GM13976 (cell line): ENCODE measurements at regions of chr3 and their contacts with region 1.

Region 1: DNA sequence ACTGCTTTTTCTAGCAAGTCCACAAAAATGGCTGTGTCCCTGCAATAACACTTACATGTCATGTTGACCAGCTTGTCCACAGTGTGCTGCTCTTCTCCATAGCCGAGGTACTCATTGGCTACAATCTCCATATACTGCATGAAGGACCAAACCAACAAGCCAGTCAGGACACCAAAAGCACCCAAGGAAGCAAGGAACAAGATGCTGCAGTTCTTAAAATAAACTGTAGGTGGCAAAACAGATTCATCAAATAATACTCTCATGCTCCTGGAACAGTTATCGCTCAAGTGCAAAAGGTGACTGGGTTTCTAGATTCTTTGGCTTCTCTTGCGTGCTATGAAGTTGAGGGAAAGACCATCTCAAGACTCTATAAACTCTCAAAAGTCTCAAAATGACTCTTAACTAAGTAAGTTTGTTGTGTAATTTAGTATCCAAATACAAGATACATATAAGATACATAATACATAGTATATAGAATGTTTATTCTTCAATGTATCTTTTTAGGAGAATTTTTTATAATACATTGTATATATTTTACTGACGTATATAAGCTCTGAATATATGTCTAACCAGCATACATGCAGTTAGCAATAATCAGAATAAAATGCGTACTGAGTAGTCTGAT is 57.0 kb downstream of the NEK10 start:
- DNase-seq: peak; percentile 54
- CTCF ChIP-seq: peak; percentile 65

Region 2: GRCh38 chr3:27484015-27484844 is 172.1 kb after region 1 on chr3 and contains the start of gene SLC4A7:
- in situ Hi-C with region 1: loop called (anchors 10 kb)
- DNase-seq: peak; percentile 97
- CTCF ChIP-seq: no peak

Region 3: GRCh38 chr3:27578032-27578431 is 265.9 kb after region 1 on chr3:
- in situ Hi-C with region 1: no loop called
- DNase-seq: no peak
- CTCF ChIP-seq: no peak

Region 4: GRCh38 chr3:27681245-27681748 is 369.1 kb after region 1 on chr3:
- in situ Hi-C with region 1: loop called (anchors 10 kb)
- DNase-seq: peak; percentile 68
- CTCF ChIP-seq: peak; percentile 24

Region 5: DNA sequence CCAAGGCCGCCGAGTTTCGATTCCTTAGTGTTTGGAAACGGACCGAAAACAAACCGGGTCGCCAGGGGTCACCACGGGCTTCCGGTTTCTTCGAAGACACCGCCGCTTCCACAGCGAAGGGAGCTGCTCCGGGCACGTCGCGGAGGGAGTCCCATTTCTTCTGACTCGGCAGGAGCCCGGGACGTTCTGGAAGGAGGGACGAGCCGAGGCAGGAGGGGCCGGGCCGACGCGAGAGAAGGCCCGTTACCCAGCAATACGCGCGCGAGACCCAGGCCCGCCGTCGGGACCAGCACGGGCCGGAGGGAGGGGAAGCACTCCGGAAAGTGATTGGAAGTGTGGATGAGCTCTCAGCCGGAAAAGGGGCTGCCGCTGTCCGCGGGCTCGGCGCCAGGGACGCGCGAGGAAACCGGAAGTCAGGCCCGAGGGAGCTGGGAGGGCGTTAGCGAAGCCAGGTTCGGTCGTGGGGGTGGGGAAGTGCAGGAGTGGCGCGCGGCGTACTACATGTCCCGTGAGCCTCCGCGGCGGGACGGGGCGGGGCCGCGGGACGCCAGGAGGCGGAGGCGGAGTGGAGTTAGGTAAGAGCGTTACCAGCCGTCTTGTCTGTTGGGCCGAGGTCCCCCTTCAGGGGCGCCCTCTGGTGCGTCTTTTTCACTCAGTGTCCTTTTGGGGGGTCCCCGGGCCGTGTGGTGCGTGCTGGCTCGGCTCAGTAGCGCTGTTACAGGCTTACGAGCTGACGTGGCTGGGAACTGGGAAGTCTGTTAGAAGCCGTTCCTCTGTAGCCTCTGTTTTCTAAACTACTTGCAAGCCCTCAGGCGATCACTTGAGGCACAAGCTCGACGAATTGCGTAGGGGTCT is 1036.7 kb after region 1 on chr3 and contains the starts of genes AZI2 and ZCWPW2:
- in situ Hi-C with region 1: loop called (anchors 25 kb)
- DNase-seq: peak; percentile 89
- CTCF ChIP-seq: peak; percentile 25